Heart right ventricle (tissue), 16 donors: ENCODE measurements at regions of chr17 and their contacts with region 1.

Region 1: DNA sequence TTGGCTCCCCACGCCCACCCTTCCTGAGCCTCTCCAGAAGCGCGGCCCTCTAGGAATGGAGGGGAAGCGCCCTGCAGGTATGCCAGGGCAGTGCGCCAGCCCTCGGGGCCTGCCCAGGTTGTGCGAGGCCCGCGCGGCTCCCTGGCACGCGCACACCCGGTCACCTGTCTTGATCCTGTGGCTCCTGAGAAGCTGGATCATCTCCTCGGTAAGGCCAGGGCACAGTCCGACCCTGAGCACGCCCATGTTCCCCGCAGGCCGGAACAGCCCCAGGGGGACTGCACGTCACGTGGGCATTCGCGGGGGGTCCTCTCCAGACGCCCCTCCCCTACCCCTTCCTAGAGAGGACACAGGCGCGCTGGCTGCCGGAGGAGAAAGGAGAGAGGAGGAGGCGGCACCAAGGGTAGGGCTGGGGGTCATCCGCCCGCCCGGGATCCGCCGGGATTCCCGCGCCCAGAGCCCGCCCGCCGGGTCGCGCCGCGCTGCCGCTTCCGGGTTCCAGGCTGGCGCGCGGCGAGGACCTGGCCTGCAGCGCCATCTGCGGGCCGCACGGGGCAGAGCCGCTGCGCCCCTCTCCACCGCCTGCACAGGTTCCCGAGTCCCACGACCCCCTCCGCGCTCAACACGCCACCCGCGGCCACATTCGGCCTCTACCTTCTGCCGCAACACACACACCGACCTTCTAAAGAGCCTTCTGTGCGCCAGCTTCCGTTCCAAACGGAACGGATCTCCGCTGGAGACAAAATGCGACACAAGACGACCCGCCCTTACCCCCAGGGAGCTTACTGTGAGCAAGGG is at the start of gene RAD51D:
- DNase-seq: peak; percentile 59 to 79
- ATAC-seq: peak; percentile 89 to 97 (median 94)
- H3K4me3 ChIP-seq: peak within 1 kb of the TSS; percentile 73 to 97 (median 89)
- H3K27ac ChIP-seq: peak within 1 kb of the TSS in 9 of 10 donors; percentile 63 to 90 (median 74)
- H3K4me1 ChIP-seq: peaks cover 3 to 22% (median 13%) of the 10 kb centered on the region in 9 donors
- H3K27me3 ChIP-seq: no peaks in the 10 kb centered on the region
- CTCF ChIP-seq: peak; percentile 86 to 98 (median 93)
- total RNA-seq, gene RAD51D: 3.2 to 9.6 (median 5.6) TPM

Region 2: DNA sequence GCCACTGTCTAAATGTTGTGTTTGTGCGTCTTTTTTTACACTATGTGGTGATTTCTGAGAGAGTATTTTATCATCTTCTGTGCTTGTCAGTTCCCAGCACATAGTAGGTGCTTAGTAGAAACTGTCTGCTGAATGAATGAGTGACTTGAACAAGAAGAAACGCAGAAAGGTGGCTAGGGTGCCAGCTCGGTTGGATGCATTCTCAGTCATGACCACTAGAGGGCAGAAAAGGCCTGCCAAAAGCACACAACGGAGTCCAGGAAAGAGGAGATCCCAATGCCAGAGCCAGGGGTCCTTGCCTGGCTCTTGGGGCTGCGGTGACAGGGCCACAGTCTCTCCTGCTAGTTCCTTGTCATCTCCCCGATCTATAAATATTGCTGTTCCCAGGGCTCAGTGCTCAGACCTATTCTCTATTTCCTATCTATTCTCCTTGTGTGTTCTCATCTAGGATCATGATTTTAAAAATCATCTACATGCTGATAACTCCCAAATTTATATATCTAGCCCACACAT is 699.3 kb before region 1 on chr17:
- intact Hi-C with region 1: loop called in 9 of 10 experiments (anchors 2 to 10 kb)
- DNase-seq: peak; percentile 36 to 51
- ATAC-seq: peak in 7 of 8 donors; percentile 45 to 69 (median 57)
- H3K4me3 ChIP-seq: no peak overlapping the region
- H3K27ac ChIP-seq: no peak overlapping the region
- H3K4me1 ChIP-seq: no peaks in the 10 kb centered on the region
- H3K27me3 ChIP-seq: peaks cover 0 to 89% (median 72%) of the 10 kb centered on the region in 7 donors
- CTCF ChIP-seq: peak; percentile 88 to 97 (median 94)

Region 3: GRCh38 chr17:34542700-34543336 is 576.7 kb before region 1 on chr17:
- intact Hi-C with region 1: loop called (anchors 1 to 10 kb)
- DNase-seq: peak in 1 of 2 donors; percentile 18
- ATAC-seq: peak in 1 of 8 donors; percentile 55
- H3K4me3 ChIP-seq: no peak overlapping the region
- H3K27ac ChIP-seq: no peak overlapping the region
- H3K4me1 ChIP-seq: no peaks in the 10 kb centered on the region
- H3K27me3 ChIP-seq: peaks cover 0 to 75% (median 50%) of the 10 kb centered on the region in 7 donors
- CTCF ChIP-seq: peak; percentile 60 to 87 (median 82)

Region 4: GRCh38 chr17:34645594-34645993 is 474.0 kb before region 1 on chr17:
- intact Hi-C with region 1: loop called in 1 of 10 experiments (anchors 10 kb)
- DNase-seq: no peak
- ATAC-seq: no peak
- H3K4me3 ChIP-seq: no peak overlapping the region
- H3K27ac ChIP-seq: no peak overlapping the region
- H3K4me1 ChIP-seq: no peaks in the 10 kb centered on the region
- H3K27me3 ChIP-seq: peaks cover 0 to 72% (median 30%) of the 10 kb centered on the region in 7 donors
- CTCF ChIP-seq: no peak

Region 5: DNA sequence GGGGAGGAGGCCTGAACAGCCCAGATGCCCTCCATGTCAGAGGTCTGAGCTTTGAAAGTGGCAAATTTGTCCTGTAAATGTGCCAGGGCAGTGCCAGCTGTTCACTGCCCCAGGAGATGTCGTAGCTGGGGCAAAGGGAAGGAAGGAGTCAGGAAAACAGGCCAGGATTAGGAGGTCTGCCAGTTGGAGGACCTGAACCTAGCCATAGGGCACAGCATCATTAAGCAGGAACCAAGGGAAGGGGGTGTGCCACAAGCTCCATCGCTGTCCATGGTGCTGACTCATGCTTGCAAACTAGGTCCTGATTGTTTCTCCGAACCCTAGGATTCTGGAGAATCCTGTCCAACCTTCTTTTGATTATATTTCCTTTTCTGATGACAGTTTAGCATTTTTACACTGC is 416.0 kb before region 1 on chr17:
- intact Hi-C with region 1: no loop called
- DNase-seq: peak; percentile 15 to 18
- ATAC-seq: no peak
- H3K4me3 ChIP-seq: no peak overlapping the region
- H3K27ac ChIP-seq: no peak overlapping the region
- H3K4me1 ChIP-seq: no peaks in the 10 kb centered on the region
- H3K27me3 ChIP-seq: peaks cover 0 to 28% (median 8%) of the 10 kb centered on the region in 7 donors
- CTCF ChIP-seq: no peak

Region 6: GRCh38 chr17:34998205-34998604 is 121.4 kb before region 1 on chr17:
- intact Hi-C with region 1: loop called in 9 of 10 experiments (anchors 1 to 10 kb)
- DNase-seq: peak; percentile 59 to 66
- ATAC-seq: peak; percentile 70 to 87 (median 82)
- H3K4me3 ChIP-seq: no peak overlapping the region
- H3K27ac ChIP-seq: peak overlapping the region in 7 of 10 donors; percentile 50 to 77 (median 67)
- H3K4me1 ChIP-seq: peaks cover 9 to 36% (median 27%) of the 10 kb centered on the region in 9 donors
- H3K27me3 ChIP-seq: no peaks in the 10 kb centered on the region
- CTCF ChIP-seq: peak; percentile 61 to 85 (median 73)

Region 7: DNA sequence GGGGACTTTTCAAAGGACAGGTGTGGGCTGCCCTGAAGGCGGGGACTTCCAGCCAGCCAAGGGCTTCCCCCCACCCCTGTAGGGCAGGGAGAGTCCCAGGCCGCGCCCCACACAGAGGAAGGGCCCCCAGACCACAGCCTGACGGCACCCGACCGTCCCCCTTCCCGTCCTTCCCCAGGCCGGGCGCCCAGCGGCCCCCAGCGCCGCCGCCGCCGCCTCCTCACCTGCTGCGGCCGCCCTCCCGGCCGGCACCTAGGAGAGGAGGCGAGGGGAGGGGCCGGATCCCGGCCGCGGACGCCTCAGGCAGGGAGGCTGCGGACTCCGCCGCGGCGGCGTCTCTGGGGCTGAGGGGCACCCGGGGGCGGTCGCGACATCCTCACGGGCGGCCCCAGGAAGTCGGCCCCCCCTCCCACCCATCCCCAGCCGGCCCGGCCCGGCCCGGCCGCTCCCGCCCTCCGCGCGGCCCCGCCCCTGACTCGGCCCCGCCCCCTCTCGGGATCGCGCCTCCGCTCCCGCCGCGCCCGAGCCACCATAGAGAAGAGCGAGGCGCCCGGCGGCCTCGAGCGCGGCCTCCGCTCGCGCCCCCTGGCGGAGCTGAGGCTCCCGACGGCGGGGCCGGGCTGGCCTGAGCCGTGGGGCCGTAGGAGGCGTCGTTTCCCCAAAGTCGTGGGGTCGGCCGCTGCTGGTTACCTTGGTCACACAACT is 30.5 kb before region 1 on chr17:
- intact Hi-C with region 1: loop called in 3 of 10 experiments (anchors 1 to 2 kb)
- DNase-seq: peak; percentile 85 to 91
- ATAC-seq: peak; percentile 93 to 98 (median 96)
- H3K4me3 ChIP-seq: peak overlapping the region; percentile 76 to 99 (median 92)
- H3K27ac ChIP-seq: peak overlapping the region; percentile 33 to 95 (median 86)
- H3K4me1 ChIP-seq: peaks cover 0 to 27% (median 11%) of the 10 kb centered on the region in 9 donors
- H3K27me3 ChIP-seq: no peaks in the 10 kb centered on the region
- CTCF ChIP-seq: peak; percentile 72 to 92 (median 84)

Region 8: GRCh38 chr17:35286120-35286781 is 166.7 kb after region 1 on chr17:
- intact Hi-C with region 1: no loop called
- DNase-seq: no peak
- ATAC-seq: no peak
- H3K4me3 ChIP-seq: no peak overlapping the region
- H3K27ac ChIP-seq: no peak overlapping the region
- H3K4me1 ChIP-seq: peaks cover 0 to 6% (median 0%) of the 10 kb centered on the region in 9 donors
- H3K27me3 ChIP-seq: peaks cover 0 to 10% (median 0%) of the 10 kb centered on the region in 7 donors
- CTCF ChIP-seq: no peak